Endothelial cell of umbilical vein (primary cell): ENCODE measurements at regions of chr2 and their contacts with region 1.

Region 1: DNA sequence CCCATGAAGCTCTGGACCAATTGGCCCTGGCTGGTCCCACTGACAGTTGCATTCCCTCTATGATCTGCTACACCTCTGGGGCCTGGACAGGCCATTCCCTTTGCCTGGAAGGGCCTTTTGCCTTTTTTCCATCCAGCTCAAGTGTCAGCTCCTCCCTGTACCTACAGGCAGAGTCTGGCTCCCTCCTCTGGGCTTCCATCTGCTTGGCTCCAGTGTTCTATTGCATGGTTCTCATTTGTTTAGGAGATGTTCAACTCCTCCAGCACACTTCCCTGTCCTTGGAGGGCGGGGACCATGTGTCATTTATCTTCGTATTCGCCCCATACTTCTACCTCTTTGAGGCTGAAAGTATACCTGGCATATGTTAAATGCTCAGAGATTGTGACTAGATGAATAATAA is 61.1 kb downstream of the PRKCE start:
- DNase-seq: no peak
- H3K4me3 ChIP-seq: no peak overlapping the region
- H3K27ac ChIP-seq: no peak overlapping the region
- H3K4me1 ChIP-seq: no peaks in the 10 kb centered on the region
- H3K27me3 ChIP-seq: no peaks in the 10 kb centered on the region
- CTCF ChIP-seq: no peak
- POLR2A ChIP-seq: no peak

Region 2: DNA sequence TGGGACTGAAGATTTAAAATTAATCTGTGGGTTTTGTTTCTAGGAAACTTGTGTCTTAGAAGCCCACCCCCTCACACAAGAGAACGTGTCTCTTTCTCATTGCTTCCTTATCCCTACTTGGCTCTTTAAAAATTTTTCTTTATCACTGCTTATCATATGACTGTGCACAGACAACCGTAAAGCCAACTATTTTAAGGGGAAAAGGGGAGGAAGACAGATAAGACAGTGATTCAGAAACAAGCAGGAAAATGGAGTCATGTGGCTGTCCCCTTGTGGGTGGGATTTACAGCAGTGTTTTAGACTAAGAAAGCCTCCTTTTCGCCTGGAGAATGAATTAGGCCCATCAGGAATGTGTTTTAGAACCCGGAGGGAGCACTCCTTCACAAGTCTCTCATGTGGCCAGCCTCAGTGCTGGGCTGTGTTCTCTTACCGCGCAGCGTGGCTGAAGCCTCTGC is 43.5 kb before region 1 on chr2:
- CTCF ChIA-PET with region 1: no interaction called
- POLR2A ChIA-PET with region 1: no interaction called
- dilution Hi-C with region 1: no loop called
- intact Hi-C with region 1: loop called (anchors 5 kb)
- DNase-seq: peak; percentile 96
- H3K4me3 ChIP-seq: peak overlapping the region in 1 of 3 experiments; percentile 46
- H3K27ac ChIP-seq: peak overlapping the region; percentile 93
- H3K4me1 ChIP-seq: peaks cover 16% of the 10 kb centered on the region
- H3K27me3 ChIP-seq: no peaks in the 10 kb centered on the region
- CTCF ChIP-seq: no peak
- POLR2A ChIP-seq: peak; percentile 80

Region 3: DNA sequence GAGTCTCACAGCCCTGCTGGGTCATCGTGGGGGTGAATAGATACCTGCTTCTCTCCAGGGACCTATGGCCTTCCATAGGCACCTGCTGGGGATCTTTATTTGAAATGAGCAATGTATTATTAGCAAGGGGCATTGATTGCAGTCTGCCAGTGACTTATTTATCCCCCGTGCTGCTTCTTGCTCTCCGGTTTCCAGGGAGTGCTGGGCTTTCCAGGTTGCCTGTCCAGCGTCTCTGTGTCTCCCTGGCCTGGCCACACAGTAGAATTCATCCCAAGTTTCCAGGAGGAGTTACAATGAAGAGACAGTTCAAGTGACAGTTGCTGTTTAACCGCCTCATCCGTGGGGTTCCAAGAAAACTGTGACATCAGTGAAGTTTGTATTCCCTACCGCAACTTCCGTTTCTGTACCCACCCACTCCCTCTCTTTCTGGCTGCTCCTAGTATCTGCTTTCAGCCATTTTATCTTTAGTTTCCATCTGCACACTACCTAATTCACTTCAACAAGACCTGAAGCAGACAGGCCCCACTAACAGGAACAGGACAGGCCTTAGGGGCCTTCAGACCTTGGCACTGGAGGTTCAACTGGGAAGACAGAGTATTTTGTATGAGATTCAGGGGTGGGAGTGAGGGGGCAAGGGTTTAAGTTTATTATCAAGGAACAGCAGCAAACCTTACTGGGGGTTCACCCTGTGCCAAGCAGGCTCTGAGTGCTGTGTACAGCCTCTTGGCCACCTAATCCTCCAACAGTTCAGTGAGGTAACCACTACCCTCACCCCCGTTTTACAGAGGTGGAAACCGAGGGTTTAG is 73.7 kb after region 1 on chr2:
- CTCF ChIA-PET with region 1: no interaction called
- POLR2A ChIA-PET with region 1: no interaction called
- dilution Hi-C with region 1: no loop called
- intact Hi-C with region 1: no loop called
- DNase-seq: no peak
- H3K4me3 ChIP-seq: no peak overlapping the region
- H3K27ac ChIP-seq: no peak overlapping the region
- H3K4me1 ChIP-seq: peaks cover 21% of the 10 kb centered on the region
- H3K27me3 ChIP-seq: no peaks in the 10 kb centered on the region
- CTCF ChIP-seq: no peak
- POLR2A ChIP-seq: no peak